ENCODE measurements at regions of chr6 and their contacts with region 1.

Region 1: DNA sequence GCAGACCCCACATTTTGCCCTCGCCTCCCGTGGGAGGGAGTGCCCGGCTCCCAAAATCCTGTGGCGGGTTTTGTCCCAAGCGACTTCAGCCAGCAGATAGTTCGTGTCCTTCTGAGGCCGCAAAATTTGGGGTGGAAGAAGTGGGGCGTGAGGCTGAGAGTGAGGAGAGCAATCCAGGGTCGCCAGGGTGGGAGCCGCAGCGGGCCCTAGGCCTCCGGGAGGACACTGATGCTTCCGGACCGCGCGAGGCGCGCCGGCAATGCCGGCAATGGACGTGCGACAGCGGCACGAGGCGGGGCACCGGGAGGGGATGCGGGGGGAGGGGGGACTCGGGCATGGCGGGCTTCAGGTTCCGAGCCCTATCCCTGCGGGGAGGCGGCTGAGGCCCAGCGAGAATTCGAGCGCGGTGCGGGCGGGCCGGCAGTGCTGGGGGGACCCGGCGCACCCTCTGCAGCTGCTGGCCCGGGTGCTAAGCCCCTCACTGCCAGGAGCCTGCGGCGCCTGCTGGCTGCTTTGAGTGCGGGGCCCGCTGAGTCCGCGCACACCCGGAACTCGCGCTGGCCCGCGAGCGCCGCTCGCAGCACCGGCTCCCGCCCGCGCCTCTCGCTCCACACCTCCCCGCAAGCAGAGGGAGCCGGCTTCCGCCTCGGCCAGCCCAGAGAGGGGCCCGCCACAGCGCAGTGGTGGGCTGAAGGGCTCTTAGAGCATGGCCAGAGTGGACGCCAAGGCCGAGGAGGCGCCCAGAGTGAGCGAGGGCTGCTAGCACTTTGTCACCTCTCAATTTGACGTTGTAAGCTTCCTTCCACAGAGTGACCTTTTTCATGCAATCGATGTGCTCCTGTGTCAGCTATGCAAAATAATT is 143.8 kb downstream of the LPA start:
- DNase-seq: no peak
- ATAC-seq: peak; percentile 52
- H3K4me3 ChIP-seq: no peak overlapping the region
- H3K27ac ChIP-seq: no peak overlapping the region
- H3K4me1 ChIP-seq: no peaks in the 10 kb centered on the region
- H3K27me3 ChIP-seq: 0 out of 2 replicates have a peak, but pooled peaks cover 3% of the 10 kb centered on the region
- CTCF ChIP-seq: peak in 2 of 3 experiments; percentile 67 to 91; a peak in 2 of 6 replicates
- POLR2A ChIP-seq: no peak
- RAD21 ChIP-seq: peak; percentile 77

Region 2: GRCh38 chr6:160534050-160534696 is 13.9 kb after region 1 on chr6:
- CTCF ChIA-PET with region 1: interaction called, 10 read pairs
- POLR2A ChIA-PET with region 1: no interaction called
- RAD21 ChIA-PET with region 1: no interaction called
- intact Hi-C with region 1: loop called (anchors 2 kb)
- DNase-seq: peak; percentile 18
- ATAC-seq: peak; percentile 88
- H3K4me3 ChIP-seq: no peak overlapping the region
- H3K27ac ChIP-seq: no peak overlapping the region
- H3K4me1 ChIP-seq: no peaks in the 10 kb centered on the region
- H3K27me3 ChIP-seq: 0 out of 2 replicates have a peak, but pooled peaks cover 4% of the 10 kb centered on the region
- CTCF ChIP-seq: peak; percentile 53 to 91 (median 79); a peak in 5 of 6 replicates
- POLR2A ChIP-seq: no peak
- RAD21 ChIP-seq: peak; percentile 76

Region 3: DNA sequence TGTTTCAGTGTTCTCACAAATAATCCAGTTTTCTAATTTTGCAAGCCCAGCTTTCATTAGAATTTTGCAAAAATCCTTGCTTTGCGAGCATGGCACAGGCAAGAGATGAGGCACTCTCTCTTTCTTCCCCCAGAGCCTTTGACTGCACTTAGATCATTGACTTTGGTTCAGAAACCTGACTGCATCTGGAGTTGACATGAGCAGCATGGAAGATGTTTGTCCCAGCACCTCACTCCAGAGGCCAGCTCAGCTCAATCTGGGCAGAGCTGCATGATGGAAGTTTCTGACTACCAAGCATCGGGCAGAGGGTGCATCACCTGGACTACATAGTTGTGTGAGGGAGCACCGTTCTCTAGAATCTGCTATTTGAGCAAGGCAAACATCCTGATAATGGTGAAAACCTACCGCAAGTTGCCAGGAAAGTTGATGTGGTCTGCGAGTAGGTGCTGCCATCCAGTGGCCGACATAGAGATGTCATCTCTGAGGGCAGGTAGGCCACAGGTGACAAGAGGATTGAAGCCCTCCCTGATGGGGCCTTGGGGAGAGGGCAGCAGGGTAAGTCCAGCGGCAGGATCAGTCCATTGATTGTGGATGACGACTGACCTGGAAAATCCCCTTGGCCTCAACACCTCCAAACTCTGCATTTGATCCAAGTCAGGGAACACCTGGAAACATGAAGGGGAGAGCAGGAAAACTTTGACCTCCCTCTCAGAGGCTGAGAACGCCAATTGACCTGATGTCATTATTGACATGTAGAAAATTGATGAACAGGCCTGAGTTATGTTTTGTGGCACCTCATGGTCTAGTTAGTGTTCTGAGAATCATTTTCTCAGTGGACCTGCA is 147.6 kb after region 1 on chr6:
- CTCF ChIA-PET with region 1: interaction called, 10 read pairs
- POLR2A ChIA-PET with region 1: no interaction called
- RAD21 ChIA-PET with region 1: no interaction called
- intact Hi-C with region 1: loop called (anchors 1 kb)
- DNase-seq: peak; percentile 35
- ATAC-seq: peak; percentile 94
- H3K4me3 ChIP-seq: no peak overlapping the region
- H3K27ac ChIP-seq: no peak overlapping the region
- H3K4me1 ChIP-seq: no peaks in the 10 kb centered on the region
- H3K27me3 ChIP-seq: 0 out of 2 replicates have a peak, but pooled peaks cover 11% of the 10 kb centered on the region
- CTCF ChIP-seq: peak; percentile 52 to 86 (median 77); a peak in 5 of 6 replicates
- POLR2A ChIP-seq: no peak
- RAD21 ChIP-seq: peak; percentile 81